ENCODE measurements at regions of chr19 and their contacts with region 1.

Region 1: DNA sequence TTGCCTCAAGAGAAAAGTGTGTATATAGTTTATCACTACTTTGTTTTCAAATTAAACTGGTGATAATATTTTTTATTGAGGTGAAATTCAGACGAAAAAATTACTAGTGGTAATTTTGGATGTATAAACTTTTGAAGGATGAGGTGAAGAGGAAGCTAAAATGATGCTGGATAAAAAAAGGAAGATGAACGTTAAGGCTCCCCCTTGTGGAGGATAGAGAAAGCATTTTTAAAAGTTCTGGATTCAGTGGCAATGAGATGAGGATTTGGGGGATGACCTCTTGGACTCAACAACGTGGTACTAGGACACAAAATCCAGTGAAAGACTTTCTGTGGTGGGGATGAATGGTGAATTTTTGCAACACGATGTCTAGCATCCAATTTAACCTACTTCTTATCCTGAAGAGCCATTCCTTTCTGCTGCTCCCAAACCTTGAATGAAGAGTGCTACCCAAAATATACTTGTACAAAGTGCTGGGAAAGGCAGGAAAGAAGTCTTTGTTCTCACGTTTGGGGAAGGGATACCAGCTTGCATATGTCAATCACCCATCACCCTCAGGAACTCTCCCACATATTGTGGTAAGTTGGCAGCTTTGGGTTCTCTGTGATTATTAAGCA is 7.3 kb upstream of the SIGLEC5 start:
- DNase-seq: no peak
- H3K4me3 Mint-ChIP-seq: no peak overlapping the region
- H3K27ac Mint-ChIP-seq: no peak overlapping the region
- H3K4me1 Mint-ChIP-seq: no peaks in the 10 kb centered on the region
- H3K27me3 Mint-ChIP-seq: peaks cover 19% of the 10 kb centered on the region

Region 2: DNA sequence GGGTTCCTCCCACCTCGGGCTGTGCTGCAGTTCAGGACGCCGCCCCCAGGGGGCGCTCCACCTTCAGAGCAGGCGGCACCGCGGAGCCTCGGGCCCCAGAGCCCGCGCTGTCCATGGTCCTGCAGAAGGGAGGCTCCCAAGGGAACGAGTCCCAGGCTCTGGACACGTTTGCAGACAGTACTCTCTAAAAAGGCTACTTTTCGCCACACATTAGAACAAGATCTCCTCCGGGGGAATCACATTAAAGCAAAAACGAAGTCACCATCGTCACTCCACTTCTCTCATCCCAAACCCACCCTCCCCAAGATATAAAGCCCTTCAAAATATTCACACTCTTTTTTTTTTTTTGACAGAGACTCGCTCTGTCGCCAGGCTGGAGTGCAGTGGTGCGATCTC is 215.4 kb before region 1 on chr19:
- intact Hi-C with region 1: loop called (anchors 1 kb)
- DNase-seq: peak; percentile 78
- H3K4me3 Mint-ChIP-seq: no peak overlapping the region
- H3K27ac Mint-ChIP-seq: no peak overlapping the region
- H3K4me1 Mint-ChIP-seq: peaks cover 10% of the 10 kb centered on the region
- H3K27me3 Mint-ChIP-seq: peaks cover 26% of the 10 kb centered on the region

Region 3: DNA sequence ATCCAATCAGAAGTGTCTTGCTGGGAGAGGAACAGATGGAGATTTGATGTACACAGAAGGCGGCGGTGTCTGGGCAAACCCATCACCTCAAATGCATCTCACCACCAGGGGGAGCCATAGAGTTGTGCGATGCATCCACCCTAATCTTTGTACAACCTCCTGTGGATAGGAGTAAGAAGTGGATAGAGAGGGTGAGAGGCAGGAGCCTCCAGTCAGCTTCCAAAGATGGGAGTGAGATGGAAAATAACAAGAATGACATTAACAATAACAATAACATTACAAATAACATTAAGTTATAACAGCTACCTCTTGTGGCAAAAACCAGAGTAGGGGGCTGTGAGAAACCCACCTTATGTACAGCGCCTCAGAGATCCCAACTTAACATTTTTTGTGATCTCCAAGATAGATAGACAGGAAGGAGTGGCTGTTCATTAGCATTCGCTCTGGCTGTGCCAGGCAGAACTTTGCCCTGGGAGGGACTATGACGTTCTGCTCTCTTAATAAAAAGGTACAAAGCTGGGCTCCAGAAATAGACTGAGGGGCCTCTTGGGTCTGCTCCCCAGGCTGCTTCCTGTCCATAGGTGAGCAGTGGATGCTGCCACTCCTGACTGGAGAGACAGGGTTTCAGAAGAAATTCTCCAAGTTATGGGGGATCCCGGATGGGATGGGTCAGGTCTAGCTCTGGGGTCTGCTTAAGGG is 164.3 kb before region 1 on chr19:
- intact Hi-C with region 1: loop called (anchors 1 kb)
- DNase-seq: peak; percentile 63
- H3K4me3 Mint-ChIP-seq: no peak overlapping the region
- H3K27ac Mint-ChIP-seq: peak overlapping the region; percentile 55
- H3K4me1 Mint-ChIP-seq: peaks cover 31% of the 10 kb centered on the region
- H3K27me3 Mint-ChIP-seq: peaks cover 9% of the 10 kb centered on the region

Region 4: DNA sequence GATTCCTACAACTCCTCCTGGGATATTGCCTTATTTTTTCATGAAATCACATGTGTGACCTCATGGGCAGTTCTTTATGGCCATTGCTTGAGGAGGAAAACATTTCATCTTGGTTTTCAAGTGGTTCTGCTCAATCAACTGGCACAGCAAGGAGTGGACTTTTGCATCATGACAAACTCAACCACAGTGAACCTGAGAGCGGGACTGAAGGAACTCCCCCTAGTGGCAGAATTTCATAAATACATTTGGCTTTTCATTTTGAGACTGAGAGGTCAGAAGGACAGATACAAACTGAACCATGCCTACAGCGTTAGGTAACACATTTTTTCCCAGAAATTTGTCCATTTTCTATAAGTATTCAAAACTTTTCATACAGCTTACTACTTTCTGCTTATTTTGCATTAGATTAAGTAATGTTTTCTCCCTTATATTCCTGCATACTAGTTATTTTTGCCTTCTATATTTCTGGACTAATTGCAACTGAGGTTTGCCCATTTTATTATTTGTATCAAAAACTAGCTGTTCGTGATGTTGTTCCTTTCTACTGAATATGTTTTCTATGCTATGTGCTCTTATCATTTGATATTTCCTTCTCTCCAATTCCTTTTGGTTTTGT is 122.5 kb before region 1 on chr19:
- intact Hi-C with region 1: loop called (anchors 5 kb)
- DNase-seq: peak; percentile 15
- H3K4me3 Mint-ChIP-seq: no peak overlapping the region
- H3K27ac Mint-ChIP-seq: no peak overlapping the region
- H3K4me1 Mint-ChIP-seq: peaks cover 17% of the 10 kb centered on the region
- H3K27me3 Mint-ChIP-seq: peaks cover 26% of the 10 kb centered on the region

Region 5: GRCh38 chr19:51600940-51601580 is 36.4 kb before region 1 on chr19:
- intact Hi-C with region 1: loop called (anchors 5 kb)
- DNase-seq: no peak
- H3K4me3 Mint-ChIP-seq: no peak overlapping the region
- H3K27ac Mint-ChIP-seq: no peak overlapping the region
- H3K4me1 Mint-ChIP-seq: no peaks in the 10 kb centered on the region
- H3K27me3 Mint-ChIP-seq: peaks cover 12% of the 10 kb centered on the region

Region 6: DNA sequence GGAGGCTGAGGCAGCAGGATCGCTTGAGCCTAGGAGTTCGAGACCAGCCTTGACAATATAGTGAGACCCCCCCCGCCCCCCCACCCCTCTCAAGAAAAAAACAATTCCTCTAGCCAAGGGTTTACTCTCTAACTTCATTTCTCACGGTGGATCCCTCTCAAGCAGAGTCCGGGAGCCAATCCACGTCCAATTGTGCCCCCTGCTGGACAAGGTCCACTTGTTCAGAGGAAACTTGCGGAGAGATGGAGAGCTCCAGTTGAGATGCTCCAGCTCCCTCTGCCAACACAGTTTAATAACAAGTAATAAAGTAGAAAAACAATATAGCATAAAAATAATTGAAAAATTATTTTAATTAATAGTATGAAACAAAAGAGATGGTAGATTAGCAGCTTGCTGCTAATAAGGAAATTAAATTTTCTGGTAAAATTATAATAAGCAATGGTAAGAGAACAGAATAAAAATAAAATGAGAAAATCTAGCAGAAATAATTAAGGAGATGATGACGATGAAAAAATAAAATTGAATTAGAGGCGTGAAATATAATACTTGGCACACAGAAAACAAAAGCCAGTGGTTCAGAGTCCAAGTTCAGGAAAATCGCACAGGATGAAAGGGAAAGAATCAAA is 23.6 kb after region 1 on chr19:
- intact Hi-C with region 1: loop called (anchors 2 kb)
- DNase-seq: no peak
- H3K4me3 Mint-ChIP-seq: no peak overlapping the region
- H3K27ac Mint-ChIP-seq: no peak overlapping the region
- H3K4me1 Mint-ChIP-seq: peaks cover 6% of the 10 kb centered on the region
- H3K27me3 Mint-ChIP-seq: peaks cover 14% of the 10 kb centered on the region

Region 7: DNA sequence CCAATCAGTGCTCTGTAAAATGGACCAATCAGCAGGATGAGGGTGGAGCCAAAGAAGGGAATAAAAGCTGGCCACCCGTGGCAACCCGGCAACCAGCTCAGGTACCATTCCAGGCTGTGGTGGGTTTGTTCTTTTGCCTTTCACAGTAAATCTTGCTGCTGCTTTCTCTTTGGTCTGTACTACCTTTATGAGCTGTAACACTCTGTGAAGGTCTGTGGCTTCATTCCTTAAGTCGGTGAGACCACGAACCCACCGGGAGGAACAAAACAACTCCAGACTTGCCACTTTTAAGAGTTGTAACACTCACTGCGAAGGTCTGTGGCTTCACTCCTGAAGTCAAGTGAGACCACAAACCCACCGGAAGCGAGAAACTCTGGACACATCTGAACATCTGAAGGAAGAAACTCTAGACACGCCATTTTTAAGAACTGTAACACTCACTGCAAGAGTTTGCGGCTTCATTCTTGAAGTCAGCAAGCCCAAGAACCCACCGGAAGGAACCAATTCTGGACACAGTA is 39.2 kb after region 1 on chr19:
- intact Hi-C with region 1: no loop called
- DNase-seq: no peak
- H3K4me3 Mint-ChIP-seq: no peak overlapping the region
- H3K27ac Mint-ChIP-seq: no peak overlapping the region
- H3K4me1 Mint-ChIP-seq: no peaks in the 10 kb centered on the region
- H3K27me3 Mint-ChIP-seq: peaks cover 2% of the 10 kb centered on the region